ENCODE measurements at regions of chr21 and their contacts with region 1.

Region 1: DNA sequence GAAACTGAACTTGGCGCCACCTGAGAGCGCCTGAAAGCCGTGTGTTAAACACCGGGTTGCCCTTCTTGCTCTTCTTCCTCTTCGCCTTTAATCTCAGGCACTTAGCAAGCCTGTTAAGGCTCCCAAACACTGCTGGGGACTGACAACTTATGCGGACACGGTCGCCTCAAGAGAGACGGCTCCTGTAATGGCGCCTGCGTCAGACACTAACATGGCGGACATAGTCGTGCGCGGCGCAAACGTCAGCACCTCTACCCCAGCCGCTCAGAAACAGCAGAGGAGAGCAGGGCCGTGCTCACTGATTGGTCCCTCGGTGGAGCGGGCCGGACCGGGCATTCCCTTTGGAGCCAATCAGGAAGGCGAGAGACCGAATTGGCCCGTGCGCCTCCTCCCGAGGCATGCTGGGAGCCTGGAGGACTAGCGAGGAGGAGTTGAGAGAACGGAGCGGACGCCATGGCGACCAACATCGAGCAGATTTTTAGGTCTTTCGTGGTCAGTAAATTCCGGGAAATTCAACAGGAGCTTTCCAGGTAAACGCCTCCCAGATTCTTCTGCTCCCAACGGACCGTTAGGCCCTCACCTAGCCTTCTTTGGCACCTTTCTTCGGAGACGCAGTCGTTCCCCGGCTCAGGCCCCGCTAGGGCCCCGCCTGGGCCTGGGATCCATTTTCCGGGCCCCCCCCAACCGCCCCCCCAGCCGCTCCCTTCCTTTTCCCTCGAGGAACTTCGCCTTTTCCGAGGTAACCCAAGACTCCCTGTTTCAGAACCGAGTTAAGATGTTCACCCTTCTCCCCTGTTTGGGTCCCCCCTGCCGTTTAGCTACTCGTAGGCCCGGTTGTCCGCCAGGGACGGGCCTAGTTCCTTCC is at the start of gene SON:
- DNase-seq: peak; percentile 99
- H3K4me3 ChIP-seq: peak within 1 kb of the TSS; percentile 59
- H3K27ac ChIP-seq: peak within 1 kb of the TSS; percentile 99
- H3K4me1 ChIP-seq: peaks cover 10% of the 10 kb centered on the region
- H3K27me3 ChIP-seq: no peaks in the 10 kb centered on the region
- CTCF ChIP-seq: no peak
- total RNA-seq, gene SON: 190 to 213 TPM

Region 2: DNA sequence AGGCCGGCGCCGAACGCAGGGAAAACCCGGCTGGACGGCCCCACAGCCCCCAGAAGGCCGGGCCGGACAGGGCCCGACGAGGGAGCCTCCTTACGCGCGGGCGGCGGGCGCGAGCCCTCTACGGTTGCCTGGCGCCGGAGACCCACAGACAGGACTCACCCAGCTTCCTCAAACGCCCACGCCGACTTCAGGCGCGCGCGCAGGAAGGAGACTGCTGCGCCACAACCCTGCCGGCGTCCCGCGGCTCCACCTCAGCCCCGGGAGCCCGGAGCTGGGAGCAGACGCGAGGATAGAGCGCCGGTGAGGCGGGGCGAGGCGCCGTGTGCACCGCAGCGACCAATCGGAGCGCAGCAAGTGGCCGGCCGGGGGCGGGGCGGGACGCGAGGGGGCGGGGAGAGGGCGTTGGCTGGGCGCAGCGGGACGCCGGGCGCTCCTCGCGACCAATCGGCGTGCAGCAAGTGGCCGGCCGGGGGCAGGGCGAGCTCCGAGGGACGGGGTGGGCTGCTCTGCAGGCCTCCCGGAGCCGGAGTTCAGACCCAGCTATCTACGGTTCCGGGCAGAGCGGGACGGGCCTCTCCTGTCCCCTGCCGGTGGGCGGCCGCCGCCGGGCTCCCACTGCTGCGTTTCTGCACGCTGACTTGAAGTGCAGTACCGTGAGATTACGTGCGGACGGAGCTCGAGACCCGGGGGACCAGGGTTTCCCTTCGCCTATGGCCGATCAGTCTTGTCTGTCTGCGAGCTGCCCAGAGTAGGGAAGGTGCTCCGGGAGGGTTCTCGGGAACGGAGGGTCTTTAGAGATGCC is 63.0 kb before region 1 on chr21 and contains the start of gene TMEM50B:
- intact Hi-C with region 1: loop called (anchors 5 kb)
- DNase-seq: peak; percentile 97
- H3K4me3 ChIP-seq: peak within 1 kb of the TSS; percentile 99
- H3K27ac ChIP-seq: peak within 1 kb of the TSS; percentile 99
- H3K4me1 ChIP-seq: peaks cover 5% of the 10 kb centered on the region
- H3K27me3 ChIP-seq: no peaks in the 10 kb centered on the region
- CTCF ChIP-seq: peak; percentile 28
- total RNA-seq, gene TMEM50B: 29.0 to 50.1 TPM

Region 3: GRCh38 chr21:33588485-33589335 is 45.8 kb after region 1 on chr21 and contains the start of gene DONSON:
- intact Hi-C with region 1: loop called (anchors 5 kb)
- DNase-seq: peak; percentile 92
- H3K4me3 ChIP-seq: peak within 1 kb of the TSS; percentile 94
- H3K27ac ChIP-seq: peak within 1 kb of the TSS; percentile 74
- H3K4me1 ChIP-seq: no peaks in the 10 kb centered on the region
- H3K27me3 ChIP-seq: no peaks in the 10 kb centered on the region
- CTCF ChIP-seq: no peak
- total RNA-seq, gene DONSON: 7.7 to 21.7 TPM

Measured in colonic mucosa (tissue), 4 donors.